Astrocyte of the cerebellum (primary cell): ENCODE measurements at regions of chr3 and their contacts with region 1.

Region 1: GRCh38 chr3:9690451-9691450 is 12.9 kb upstream of the CPNE9 start:
- DNase-seq: no peak
- H3K4me3 ChIP-seq: no peak overlapping the region
- CTCF ChIP-seq: no peak

Region 2: GRCh38 chr3:9497821-9498565 is 192.8 kb before region 1 on chr3:
- in situ Hi-C with region 1: loop called (anchors 25 kb)
- DNase-seq: no peak
- H3K4me3 ChIP-seq: no peak overlapping the region
- CTCF ChIP-seq: no peak